ENCODE measurements at regions of chr9 and their contacts with region 1.

Region 1: GRCh38 chr9:37508834-37509206 is 23.1 kb downstream of the POLR1E start:
- DNase-seq: no peak
- H3K4me3 ChIP-seq: no peak overlapping the region
- H3K4me3 Mint-ChIP-seq: no peak overlapping the region
- H3K27ac ChIP-seq: no peak overlapping the region
- H3K27ac Mint-ChIP-seq: peak overlapping the region in 5 of 7 donors; percentile 16 to 82 (median 71)
- H3K4me1 ChIP-seq: peaks cover 7% of the 10 kb centered on the region
- H3K4me1 Mint-ChIP-seq: peaks cover 5 to 37% (median 19%) of the 10 kb centered on the region in 4 donors
- H3K27me3 ChIP-seq: no peaks in the 10 kb centered on the region
- H3K27me3 Mint-ChIP-seq: no peaks in the 10 kb centered on the region

Region 2: DNA sequence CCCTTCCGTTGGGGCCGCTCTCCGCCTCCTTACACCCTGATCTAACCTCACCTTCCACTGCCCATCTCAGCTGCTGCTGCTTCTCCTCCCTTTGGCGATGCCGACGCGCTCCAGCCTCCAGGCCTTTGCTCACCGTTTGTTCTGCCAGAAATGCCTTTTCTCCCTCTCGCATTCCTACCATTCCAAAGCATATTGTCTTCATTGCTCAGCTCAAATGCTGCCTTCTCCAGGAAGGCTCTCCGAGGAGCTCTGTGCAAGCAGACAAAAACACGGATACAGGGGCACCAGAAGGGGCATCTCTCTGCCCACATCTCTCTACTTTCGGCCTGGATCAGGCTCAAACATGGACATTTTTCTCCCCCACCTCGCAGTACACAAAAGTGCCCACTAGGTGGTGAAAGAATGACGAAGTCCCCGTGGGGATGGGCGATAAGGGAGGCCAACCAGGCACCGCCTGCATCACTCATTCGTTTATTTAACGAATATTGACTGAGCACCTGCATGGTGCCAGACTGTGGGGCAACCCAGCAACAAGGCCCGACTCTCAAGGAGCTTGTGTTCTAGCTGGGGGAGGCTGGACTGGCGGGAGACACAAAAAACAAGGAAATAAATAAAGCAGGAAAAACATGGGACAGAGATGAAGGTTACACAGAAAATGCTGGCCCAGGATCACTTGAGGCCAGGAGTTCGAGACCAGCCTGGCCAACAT is 93.7 kb before region 1 on chr9:
- CTCF ChIA-PET with region 1: interaction called, 3 read pairs
- POLR2A ChIA-PET with region 1: no interaction called
- intact Hi-C with region 1: loop called (anchors 2 kb)
- DNase-seq: peak; percentile 65 to 77 (median 71)
- H3K4me3 ChIP-seq: no peak overlapping the region
- H3K4me3 Mint-ChIP-seq: peak overlapping the region in 4 of 8 donors; percentile 48 to 80 (median 66)
- H3K27ac ChIP-seq: no peak overlapping the region
- H3K27ac Mint-ChIP-seq: peak overlapping the region in 6 of 7 donors; percentile 68 to 90 (median 86)
- H3K4me1 ChIP-seq: peaks cover 11% of the 10 kb centered on the region
- H3K4me1 Mint-ChIP-seq: peaks cover 9 to 17% (median 13%) of the 10 kb centered on the region in 4 donors
- H3K27me3 ChIP-seq: no peaks in the 10 kb centered on the region
- H3K27me3 Mint-ChIP-seq: peaks cover 4 to 5% of the 10 kb centered on the region in 2 donors

Region 3: DNA sequence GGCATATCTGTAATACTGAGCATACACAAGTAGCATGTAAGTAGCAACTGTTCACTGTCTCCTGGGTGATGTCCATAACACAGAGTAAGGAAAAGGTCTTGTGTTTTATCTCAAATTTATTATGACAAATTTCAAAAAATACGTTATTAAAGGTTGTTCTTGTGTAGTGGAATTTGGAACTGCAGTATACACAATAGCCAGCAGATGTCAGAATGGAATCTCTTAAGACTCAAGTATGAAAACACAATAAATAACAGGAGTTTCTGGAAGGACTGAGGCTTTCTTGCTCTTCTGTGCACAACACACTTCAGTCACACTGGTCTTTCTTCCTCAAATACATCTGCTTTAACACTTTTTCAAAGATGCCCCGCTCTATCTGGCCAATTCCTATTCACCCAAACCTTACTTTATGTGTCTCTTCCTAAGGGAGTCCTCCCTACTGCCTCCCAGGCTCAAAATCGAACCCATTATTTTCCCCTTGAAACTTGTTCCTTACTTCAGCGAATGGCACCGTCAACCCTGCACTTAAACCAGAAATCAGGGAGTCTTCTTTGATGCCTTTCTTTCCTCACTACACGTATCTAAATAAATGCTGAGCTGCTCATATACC is 73.8 kb after region 1 on chr9:
- CTCF ChIA-PET with region 1: no interaction called
- POLR2A ChIA-PET with region 1: no interaction called
- intact Hi-C with region 1: no loop called
- DNase-seq: peak in 4 of 5 donors; percentile 22 to 42 (median 32)
- H3K4me3 ChIP-seq: no peak overlapping the region
- H3K4me3 Mint-ChIP-seq: no peak overlapping the region
- H3K27ac ChIP-seq: no peak overlapping the region
- H3K27ac Mint-ChIP-seq: peak overlapping the region in 4 of 7 donors; percentile 1 to 70 (median 28)
- H3K4me1 ChIP-seq: no peaks in the 10 kb centered on the region
- H3K4me1 Mint-ChIP-seq: peaks cover 3 to 10% (median 6%) of the 10 kb centered on the region in 4 donors
- H3K27me3 ChIP-seq: no peaks in the 10 kb centered on the region
- H3K27me3 Mint-ChIP-seq: no peaks in the 10 kb centered on the region